Activated T-helper 1 cell treated with anti-CD3 and anti-CD28 coated beads, Interleukin-12 subunit alpha, Interleukin-12 subunit beta, Interleukin-2, Interleukin-4 antibody, amounts not matched to agents 30 ng/mL and 10 ng/mL and 1 ng/mL, durations not matched to agents 14 hours and 24 hours and 36 hours (primary cell): ENCODE measurements at regions of chr3 and their contacts with region 1.

Region 1: DNA sequence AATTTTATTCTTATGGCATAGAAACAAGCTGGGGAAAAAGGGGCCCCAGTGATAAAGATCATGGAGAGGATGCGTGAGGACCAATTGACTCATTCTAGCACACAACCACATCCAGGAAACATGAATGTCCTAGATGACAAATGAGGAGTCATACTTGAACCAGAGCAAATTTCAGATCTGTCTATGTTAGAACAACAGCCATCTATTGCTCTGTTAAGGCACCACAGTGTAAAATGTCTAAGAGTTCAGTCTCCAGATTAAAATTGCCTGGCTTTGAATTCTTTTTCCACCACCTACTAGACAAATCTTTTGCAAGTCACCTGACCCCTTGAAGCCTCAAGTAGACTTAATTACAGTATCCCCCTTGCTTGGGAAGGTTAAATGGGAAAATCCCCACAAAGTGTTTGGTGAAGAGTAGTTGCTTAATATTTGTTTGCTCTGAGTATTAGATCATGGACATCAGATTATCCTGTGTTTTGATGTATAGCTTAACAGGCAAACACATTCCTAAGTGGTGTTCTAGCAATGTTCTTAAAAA is 258.7 kb upstream of the TGFBR2 start:
- DNase-seq: peak; percentile 46
- H3K4me3 Mint-ChIP-seq: peak overlapping the region; percentile 56
- H3K27ac Mint-ChIP-seq: peak overlapping the region; percentile 74
- H3K4me1 Mint-ChIP-seq: peaks cover 85% of the 10 kb centered on the region
- H3K27me3 Mint-ChIP-seq: peaks cover 4% of the 10 kb centered on the region

Region 2: DNA sequence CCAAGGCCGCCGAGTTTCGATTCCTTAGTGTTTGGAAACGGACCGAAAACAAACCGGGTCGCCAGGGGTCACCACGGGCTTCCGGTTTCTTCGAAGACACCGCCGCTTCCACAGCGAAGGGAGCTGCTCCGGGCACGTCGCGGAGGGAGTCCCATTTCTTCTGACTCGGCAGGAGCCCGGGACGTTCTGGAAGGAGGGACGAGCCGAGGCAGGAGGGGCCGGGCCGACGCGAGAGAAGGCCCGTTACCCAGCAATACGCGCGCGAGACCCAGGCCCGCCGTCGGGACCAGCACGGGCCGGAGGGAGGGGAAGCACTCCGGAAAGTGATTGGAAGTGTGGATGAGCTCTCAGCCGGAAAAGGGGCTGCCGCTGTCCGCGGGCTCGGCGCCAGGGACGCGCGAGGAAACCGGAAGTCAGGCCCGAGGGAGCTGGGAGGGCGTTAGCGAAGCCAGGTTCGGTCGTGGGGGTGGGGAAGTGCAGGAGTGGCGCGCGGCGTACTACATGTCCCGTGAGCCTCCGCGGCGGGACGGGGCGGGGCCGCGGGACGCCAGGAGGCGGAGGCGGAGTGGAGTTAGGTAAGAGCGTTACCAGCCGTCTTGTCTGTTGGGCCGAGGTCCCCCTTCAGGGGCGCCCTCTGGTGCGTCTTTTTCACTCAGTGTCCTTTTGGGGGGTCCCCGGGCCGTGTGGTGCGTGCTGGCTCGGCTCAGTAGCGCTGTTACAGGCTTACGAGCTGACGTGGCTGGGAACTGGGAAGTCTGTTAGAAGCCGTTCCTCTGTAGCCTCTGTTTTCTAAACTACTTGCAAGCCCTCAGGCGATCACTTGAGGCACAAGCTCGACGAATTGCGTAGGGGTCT is 1998.9 kb before region 1 on chr3 and contains the starts of genes AZI2 and ZCWPW2:
- intact Hi-C with region 1: loop called (anchors 5 kb)
- DNase-seq: peak; percentile 90
- H3K4me3 Mint-ChIP-seq: peak within 1 kb of the TSS; percentile 98
- H3K27ac Mint-ChIP-seq: peak within 1 kb of the TSS; percentile 98
- H3K4me1 Mint-ChIP-seq: peaks cover 66% of the 10 kb centered on the region
- H3K27me3 Mint-ChIP-seq: no peaks in the 10 kb centered on the region
- total RNA-seq, gene AZI2: 43.7 and 44.8 TPM in 2 replicates
- total RNA-seq, gene ZCWPW2: 0.24 TPM in 1 of 2 replicates, not detected in the other

Region 3: DNA sequence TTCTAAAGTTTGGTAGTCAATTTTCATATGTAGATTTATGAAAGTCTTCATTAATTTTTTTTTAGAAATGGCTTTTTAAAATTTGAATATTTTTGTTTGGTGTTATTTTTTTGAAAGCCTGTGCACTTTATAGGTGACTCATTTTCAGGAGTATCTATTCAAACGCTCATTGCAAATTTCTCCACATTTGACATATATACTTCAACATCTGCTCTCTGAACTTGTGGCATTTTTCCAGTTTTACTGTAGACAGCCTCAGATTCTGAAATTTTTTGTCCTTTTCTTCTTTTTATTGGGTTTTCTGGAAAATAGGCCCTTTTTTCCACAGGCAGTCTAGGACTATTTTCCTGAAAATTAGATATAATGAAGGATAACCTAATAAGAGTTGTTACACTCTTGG is 670.3 kb before region 1 on chr3:
- intact Hi-C with region 1: no loop called
- DNase-seq: no peak
- H3K4me3 Mint-ChIP-seq: no peak overlapping the region
- H3K27ac Mint-ChIP-seq: no peak overlapping the region
- H3K4me1 Mint-ChIP-seq: no peaks in the 10 kb centered on the region
- H3K27me3 Mint-ChIP-seq: peaks cover 3% of the 10 kb centered on the region

Region 4: DNA sequence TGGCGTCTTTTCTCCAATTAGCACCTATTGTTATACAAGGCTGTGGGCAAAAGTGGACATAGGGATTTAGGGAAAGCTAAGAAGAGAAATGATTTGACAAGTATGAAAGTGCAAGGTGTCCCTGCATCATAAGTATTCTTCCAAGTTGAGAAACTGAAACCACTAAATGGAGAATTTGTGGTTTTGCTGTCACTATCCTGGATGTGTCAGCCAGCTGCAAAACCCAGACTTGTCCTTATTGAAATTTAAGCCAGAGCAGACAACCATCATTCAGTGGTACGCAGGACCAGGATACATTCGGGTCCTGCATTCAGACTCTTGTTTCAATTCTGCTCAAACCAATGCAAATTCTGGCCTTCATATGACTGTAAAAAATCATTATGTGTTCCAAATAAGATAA is 126.1 kb before region 1 on chr3:
- intact Hi-C with region 1: loop called (anchors 5 kb)
- DNase-seq: no peak
- H3K4me3 Mint-ChIP-seq: no peak overlapping the region
- H3K27ac Mint-ChIP-seq: no peak overlapping the region
- H3K4me1 Mint-ChIP-seq: peaks cover 34% of the 10 kb centered on the region
- H3K27me3 Mint-ChIP-seq: peaks cover 3% of the 10 kb centered on the region

Region 5: GRCh38 chr3:30476373-30477082 is 128.8 kb after region 1 on chr3:
- intact Hi-C with region 1: loop called (anchors 2 kb)
- DNase-seq: no peak
- H3K4me3 Mint-ChIP-seq: no peak overlapping the region
- H3K27ac Mint-ChIP-seq: no peak overlapping the region
- H3K4me1 Mint-ChIP-seq: peaks cover 51% of the 10 kb centered on the region
- H3K27me3 Mint-ChIP-seq: no peaks in the 10 kb centered on the region

Region 6: GRCh38 chr3:30606301-30607031 is 258.7 kb after region 1 on chr3 and contains the start of gene TGFBR2:
- intact Hi-C with region 1: loop called (anchors 1 kb)
- DNase-seq: peak; percentile 81
- H3K4me3 Mint-ChIP-seq: peak within 1 kb of the TSS; percentile 97
- H3K27ac Mint-ChIP-seq: peak within 1 kb of the TSS; percentile 98
- H3K4me1 Mint-ChIP-seq: peaks cover 72% of the 10 kb centered on the region
- H3K27me3 Mint-ChIP-seq: no peaks in the 10 kb centered on the region
- total RNA-seq, gene TGFBR2: 58.2 and 59.6 TPM in 2 replicates

Region 7: DNA sequence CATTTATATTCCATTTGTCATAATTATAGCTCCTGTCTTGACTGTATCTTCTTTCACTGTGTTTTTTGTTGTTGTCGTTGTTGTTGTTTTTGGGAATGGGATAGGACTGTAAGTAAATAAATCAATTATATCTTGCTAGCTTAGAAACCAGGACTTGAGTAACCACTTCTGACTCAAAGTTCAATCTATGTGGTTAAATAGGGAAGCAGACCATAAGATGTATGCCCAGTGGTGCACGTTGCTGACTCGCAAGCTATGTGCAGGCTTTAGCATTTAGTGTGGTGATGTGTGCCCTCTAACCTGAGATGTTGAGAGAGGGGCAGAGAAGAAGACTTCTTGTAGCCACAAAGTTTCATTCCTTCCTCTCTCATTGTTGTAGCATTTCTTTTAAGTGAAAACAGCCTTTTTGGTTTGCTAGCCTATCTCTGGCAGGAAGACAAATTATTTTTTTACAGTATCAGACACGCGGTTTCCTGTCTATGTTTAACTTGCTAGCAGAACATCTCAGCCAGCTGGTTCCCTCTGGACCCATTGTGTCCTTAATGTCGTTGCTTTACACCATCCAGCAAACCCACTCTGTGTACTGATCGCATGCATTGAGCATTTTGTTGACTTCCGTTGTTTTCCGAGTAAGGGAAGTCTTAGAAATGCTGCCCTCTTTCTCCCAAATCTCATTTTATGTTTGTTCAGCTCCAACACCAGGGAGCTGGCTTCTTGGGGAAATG is 310.7 kb after region 1 on chr3:
- intact Hi-C with region 1: loop called (anchors 1 kb)
- DNase-seq: no peak
- H3K4me3 Mint-ChIP-seq: peak overlapping the region; percentile 85
- H3K27ac Mint-ChIP-seq: peak overlapping the region; percentile 96
- H3K4me1 Mint-ChIP-seq: peaks cover 97% of the 10 kb centered on the region
- H3K27me3 Mint-ChIP-seq: no peaks in the 10 kb centered on the region

Region 8: DNA sequence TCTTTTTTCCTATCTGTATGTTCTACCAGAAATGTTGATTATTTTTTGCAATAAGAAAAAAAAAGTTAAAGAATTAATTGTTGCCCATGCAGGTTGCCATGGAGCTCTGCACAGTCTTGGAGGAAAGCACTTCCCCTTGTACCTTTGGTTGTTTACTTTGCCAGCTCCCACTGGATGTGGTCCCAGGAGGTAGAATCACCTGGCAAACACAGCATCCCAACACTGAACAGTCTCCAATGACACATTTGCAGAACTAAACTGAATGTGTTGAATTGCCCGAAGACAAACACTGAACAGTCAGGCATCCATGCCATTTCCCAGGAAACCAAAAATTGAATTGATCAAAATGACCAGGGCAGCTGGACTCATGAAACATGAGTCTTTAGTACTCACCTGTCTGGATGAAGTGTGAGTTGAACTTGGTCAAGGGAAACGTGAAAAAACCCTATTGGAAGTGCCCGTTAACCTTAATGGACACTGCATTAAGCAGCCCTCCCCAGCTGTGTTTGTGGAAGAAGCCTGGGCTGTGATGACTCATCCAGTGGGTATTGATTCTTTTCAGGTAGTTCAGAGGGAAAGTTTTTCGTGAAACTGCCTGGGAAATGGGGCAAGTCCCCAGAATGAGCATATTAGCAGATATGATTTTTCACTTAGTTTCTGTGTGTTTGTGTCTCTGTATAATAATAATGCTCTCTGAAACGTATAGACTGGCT is 900.3 kb after region 1 on chr3:
- intact Hi-C with region 1: loop called (anchors 5 kb)
- DNase-seq: no peak
- H3K4me3 Mint-ChIP-seq: no peak overlapping the region
- H3K27ac Mint-ChIP-seq: peak overlapping the region; percentile 75
- H3K4me1 Mint-ChIP-seq: peaks cover 51% of the 10 kb centered on the region
- H3K27me3 Mint-ChIP-seq: no peaks in the 10 kb centered on the region